ENCODE measurements at regions of chr17 and their contacts with region 1.

Region 1: GRCh38 chr17:17823433-17824118 is 13.2 kb downstream of the SREBF1 start:
- DNase-seq: peak; percentile 72 to 86 (median 84)
- H3K4me3 ChIP-seq: peak overlapping the region; percentile 31 to 77 (median 69)
- H3K27ac ChIP-seq: peak overlapping the region in 1 of 2 experiments; percentile 76
- H3K4me1 ChIP-seq: peaks cover 6 to 89% (median 53%) of the 10 kb centered on the region in 4 experiments
- H3K27me3 ChIP-seq: no peaks in the 10 kb centered on the region

Region 2: GRCh38 chr17:17780922-17781590 is 42.5 kb before region 1 on chr17:
- CTCF ChIA-PET with region 1: no interaction called
- POLR2A ChIA-PET with region 1: no interaction called
- DNase-seq: peak in 2 of 3 donors; percentile 35 to 36
- H3K4me3 ChIP-seq: peak overlapping the region in 5 of 7 experiments; percentile 35 to 78 (median 67)
- H3K27ac ChIP-seq: no peak overlapping the region
- H3K4me1 ChIP-seq: peaks cover 0 to 67% (median 52%) of the 10 kb centered on the region in 4 experiments
- H3K27me3 ChIP-seq: no peaks in the 10 kb centered on the region

Region 3: DNA sequence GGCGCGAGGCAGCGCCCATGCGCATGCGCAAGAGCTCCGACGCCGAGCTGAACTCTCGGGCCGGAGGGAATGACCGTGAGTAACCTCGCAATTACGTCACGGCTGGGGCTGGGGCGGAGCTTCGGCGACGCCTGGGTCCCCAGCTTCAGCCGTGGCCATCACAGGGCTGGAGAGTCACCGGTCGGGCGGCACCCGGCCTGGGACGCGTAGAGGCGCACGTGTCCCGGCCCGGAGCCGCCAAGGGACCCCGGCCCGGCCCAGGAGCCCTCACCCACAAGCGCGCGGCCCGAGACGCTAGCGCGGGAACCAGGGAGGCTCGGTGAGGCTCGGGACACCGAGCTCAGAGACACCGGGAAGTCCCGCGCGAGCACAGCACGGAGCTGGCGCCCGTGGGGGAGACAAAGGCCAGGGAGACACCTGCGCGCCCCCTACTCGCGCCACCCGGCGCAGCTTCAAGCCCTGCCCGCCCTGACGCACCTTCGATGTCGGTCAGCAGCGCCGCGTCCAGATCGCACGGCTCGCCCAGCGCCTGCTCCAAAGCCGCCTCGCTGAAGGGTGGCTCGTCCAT is 12.8 kb after region 1 on chr17:
- CTCF ChIA-PET with region 1: interaction called, 8 read pairs
- POLR2A ChIA-PET with region 1: interaction called, 21 read pairs
- DNase-seq: peak; percentile 90 to 96 (median 92)
- H3K4me3 ChIP-seq: peak overlapping the region; percentile 62 to 91 (median 85)
- H3K27ac ChIP-seq: peak overlapping the region; percentile 58 to 76
- H3K4me1 ChIP-seq: peaks cover 18 to 73% (median 69%) of the 10 kb centered on the region in 4 experiments
- H3K27me3 ChIP-seq: no peaks in the 10 kb centered on the region